CD4-positive, alpha-beta memory T cell (primary cell): ENCODE measurements at regions of chr20 and their contacts with region 1.

Region 1: DNA sequence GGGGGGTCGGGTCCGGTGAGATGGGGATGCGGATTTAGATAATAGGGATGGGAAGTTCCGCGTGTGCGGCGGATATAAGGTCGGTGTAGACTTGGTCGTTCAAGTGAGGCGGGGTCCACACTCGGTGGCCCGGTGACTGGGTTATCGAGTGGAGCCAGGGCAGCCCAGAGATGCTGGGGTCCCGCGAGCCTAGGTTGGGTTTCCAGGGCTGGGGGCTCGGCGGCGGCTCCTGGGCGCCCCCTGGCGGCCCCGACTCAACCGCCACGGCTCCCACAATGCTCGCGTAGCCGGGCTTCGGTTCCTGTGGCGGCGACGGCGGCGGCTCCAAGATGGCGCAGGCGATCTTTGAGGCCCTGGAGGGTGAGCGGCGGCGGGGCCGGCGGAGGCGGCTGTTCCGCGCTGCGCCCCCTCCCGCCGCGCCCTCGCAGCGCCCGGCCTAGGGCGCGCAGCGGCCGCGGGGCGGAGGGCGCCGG is at the start of gene ZNF341:
- DNase-seq: peak in 4 of 5 donors; percentile 88 to 91 (median 90)
- H3K4me3 ChIP-seq: peak within 1 kb of the TSS; percentile 64 to 69
- H3K4me3 Mint-ChIP-seq: peak within 1 kb of the TSS; percentile 89 to 94 (median 93)
- H3K27ac ChIP-seq: peak within 1 kb of the TSS; percentile 64
- H3K27ac Mint-ChIP-seq: peak within 1 kb of the TSS; percentile 92 to 98 (median 96)
- H3K4me1 ChIP-seq: peaks cover 21% of the 10 kb centered on the region
- H3K4me1 Mint-ChIP-seq: peaks cover 10 to 25% (median 19%) of the 10 kb centered on the region in 4 donors
- H3K27me3 ChIP-seq: no peaks in the 10 kb centered on the region
- H3K27me3 Mint-ChIP-seq: no peaks in the 10 kb centered on the region
- total RNA-seq, gene ZNF341: 4.8 to 5.0 TPM

Region 2: DNA sequence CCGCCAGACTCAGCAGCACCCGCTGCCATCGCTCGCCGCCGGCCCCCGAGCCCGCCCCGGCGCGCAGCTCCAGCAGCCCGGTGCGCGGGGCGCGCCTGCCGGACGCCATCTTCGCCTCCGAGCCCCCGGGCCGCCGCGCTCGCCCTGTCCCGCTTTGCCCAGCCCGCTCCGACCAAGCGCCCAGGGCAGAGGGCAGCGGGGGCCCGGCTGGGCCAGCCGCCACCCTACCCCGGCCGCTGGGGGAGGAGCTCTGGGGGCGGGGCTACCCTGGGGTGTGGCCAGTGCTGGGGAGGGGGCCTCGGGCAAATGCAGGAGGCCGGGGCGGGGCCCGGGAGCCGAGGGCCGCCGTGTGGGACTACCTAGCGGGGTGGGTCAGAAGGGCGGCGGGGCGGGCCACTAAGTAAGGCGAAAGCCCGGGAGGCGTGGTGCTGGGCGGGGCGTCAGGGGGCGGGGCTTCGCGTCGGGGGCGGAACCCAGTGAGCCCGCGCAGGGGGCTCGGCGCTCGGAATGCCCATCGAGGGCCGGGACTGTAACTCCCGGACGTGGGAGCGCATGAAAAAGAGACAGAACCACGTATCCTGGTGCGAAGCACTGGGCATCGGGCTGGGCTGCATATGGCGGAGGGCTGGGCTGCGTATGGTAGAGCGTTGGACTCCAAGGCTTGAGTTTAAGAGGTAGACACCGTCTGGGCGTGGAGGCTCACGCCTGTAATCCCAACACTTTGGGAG is 288.1 kb before region 1 on chr20 and contains the start of gene SNTA1:
- CTCF ChIA-PET with region 1: interaction called, 3 read pairs
- POLR2A ChIA-PET with region 1: interaction called, 5 read pairs
- intact Hi-C with region 1: loop called (anchors 5 kb)
- DNase-seq: peak; percentile 80 to 88 (median 81)
- H3K4me3 ChIP-seq: peak within 1 kb of the TSS; percentile 42 to 85
- H3K4me3 Mint-ChIP-seq: peak within 1 kb of the TSS; percentile 92 to 97 (median 92)
- H3K27ac ChIP-seq: peak within 1 kb of the TSS; percentile 74
- H3K27ac Mint-ChIP-seq: peak within 1 kb of the TSS; percentile 90 to 97 (median 94)
- H3K4me1 ChIP-seq: peaks cover 17% of the 10 kb centered on the region
- H3K4me1 Mint-ChIP-seq: peaks cover 14 to 28% (median 22%) of the 10 kb centered on the region in 4 donors
- H3K27me3 ChIP-seq: no peaks in the 10 kb centered on the region
- H3K27me3 Mint-ChIP-seq: no peaks in the 10 kb centered on the region
- total RNA-seq, gene SNTA1: 5.1 to 5.7 TPM

Region 3: GRCh38 chr20:33489495-33490022 is 242.2 kb before region 1 on chr20:
- CTCF ChIA-PET with region 1: interaction called, 3 read pairs
- POLR2A ChIA-PET with region 1: interaction called, 23 read pairs
- intact Hi-C with region 1: no loop called
- DNase-seq: peak; percentile 98 to 99 (median 99)
- H3K4me3 ChIP-seq: peak overlapping the region; percentile 61 to 70
- H3K4me3 Mint-ChIP-seq: peak overlapping the region; percentile 81 to 96 (median 86)
- H3K27ac ChIP-seq: peak overlapping the region; percentile 89
- H3K27ac Mint-ChIP-seq: peak overlapping the region; percentile 92 to 95 (median 94)
- H3K4me1 ChIP-seq: peaks cover 16% of the 10 kb centered on the region
- H3K4me1 Mint-ChIP-seq: peaks cover 8 to 24% (median 18%) of the 10 kb centered on the region in 4 donors
- H3K27me3 ChIP-seq: no peaks in the 10 kb centered on the region
- H3K27me3 Mint-ChIP-seq: no peaks in the 10 kb centered on the region

Region 4: DNA sequence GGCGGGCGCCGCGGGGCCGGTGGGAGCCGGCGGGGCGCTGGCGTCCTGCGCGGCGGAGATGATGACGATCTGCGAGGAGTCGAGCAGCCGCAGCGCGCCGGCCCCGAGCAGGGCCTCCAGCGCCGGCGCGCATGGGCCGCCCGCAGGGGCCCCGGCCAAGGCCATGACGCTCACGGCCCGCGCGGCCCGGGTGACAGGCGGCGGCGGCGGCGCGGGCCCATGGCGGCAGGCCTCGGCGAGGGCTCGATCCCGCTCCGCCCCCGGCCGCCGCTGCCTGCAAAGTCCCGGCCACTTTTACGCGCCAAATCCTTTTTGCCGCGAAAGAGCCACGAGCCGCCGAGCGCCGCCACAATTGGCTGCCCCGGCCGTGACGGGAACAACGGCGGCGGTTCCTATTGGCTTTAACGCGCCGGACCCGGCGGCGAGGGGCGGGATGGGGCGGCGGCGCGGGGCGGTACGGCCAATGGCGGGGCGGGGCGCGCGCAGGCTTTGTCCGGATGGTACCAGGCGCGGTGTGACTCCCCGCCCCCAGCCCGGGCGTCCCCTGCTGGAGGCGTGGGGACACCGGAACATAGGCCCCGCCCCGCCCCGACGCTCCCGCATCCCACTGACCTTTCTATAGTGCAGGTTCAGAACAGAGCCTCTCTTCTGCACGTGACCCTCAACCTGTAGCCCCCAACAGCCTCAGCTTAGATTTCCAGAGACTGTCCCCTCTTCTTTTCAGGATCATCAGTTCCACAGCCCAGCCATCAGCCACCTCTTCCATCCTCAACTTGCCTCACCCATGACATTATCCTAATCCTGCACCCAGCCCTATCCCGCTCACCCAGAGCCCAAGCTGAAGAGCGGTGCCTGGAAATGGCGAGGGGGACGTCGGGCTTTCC is 45.4 kb before region 1 on chr20 and contains the start of gene E2F1:
- CTCF ChIA-PET with region 1: no interaction called
- POLR2A ChIA-PET with region 1: interaction called, 8 read pairs
- intact Hi-C with region 1: loop called (anchors 1 kb)
- DNase-seq: peak; percentile 91 to 95 (median 93)
- H3K4me3 ChIP-seq: peak within 1 kb of the TSS in 1 of 2 donors; percentile 38
- H3K4me3 Mint-ChIP-seq: peak within 1 kb of the TSS; percentile 82 to 89 (median 86)
- H3K27ac ChIP-seq: peak within 1 kb of the TSS; percentile 54
- H3K27ac Mint-ChIP-seq: peak within 1 kb of the TSS; percentile 84 to 94 (median 91)
- H3K4me1 ChIP-seq: peaks cover 40% of the 10 kb centered on the region
- H3K4me1 Mint-ChIP-seq: peaks cover 26 to 62% (median 43%) of the 10 kb centered on the region in 4 donors
- H3K27me3 ChIP-seq: no peaks in the 10 kb centered on the region
- H3K27me3 Mint-ChIP-seq: no peaks in the 10 kb centered on the region
- total RNA-seq, gene E2F1: 2.2 to 2.6 TPM